Naive thymus-derived CD4-positive, alpha-beta T cell (primary cell): ENCODE measurements at regions of chr6 and their contacts with region 1.

Region 1: DNA sequence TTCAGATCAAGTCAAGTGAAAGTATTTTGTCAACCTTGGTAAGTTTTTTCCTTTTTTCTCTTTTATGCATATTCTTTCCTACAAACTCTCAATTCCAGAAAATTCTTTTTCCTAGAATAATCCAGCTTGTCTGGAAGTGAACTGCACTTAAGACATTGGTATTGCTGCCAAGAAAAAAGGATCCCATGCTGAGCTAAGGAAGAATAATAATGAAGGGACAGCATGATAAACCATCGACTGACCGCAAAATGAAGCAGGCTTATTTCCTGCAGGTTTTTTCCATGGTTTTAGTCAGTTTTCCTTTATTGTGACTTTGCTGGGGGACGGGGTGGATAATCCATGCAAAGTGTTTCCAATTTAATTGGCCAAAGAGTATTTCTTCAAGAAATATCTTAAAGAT is 857.6 kb upstream of the SLC35B3 start:
- DNase-seq: no peak
- ATAC-seq: no peak
- H3K4me3 ChIP-seq: no peak overlapping the region
- H3K4me3 Mint-ChIP-seq: no peak overlapping the region
- H3K27ac ChIP-seq: no peak overlapping the region
- H3K27ac Mint-ChIP-seq: no peak overlapping the region
- H3K4me1 ChIP-seq: no peaks in the 10 kb centered on the region
- H3K4me1 Mint-ChIP-seq: no peaks in the 10 kb centered on the region
- H3K27me3 ChIP-seq: no peaks in the 10 kb centered on the region
- H3K27me3 Mint-ChIP-seq: no peaks in the 10 kb centered on the region

Region 2: GRCh38 chr6:9977411-9977810 is 684.4 kb after region 1 on chr6:
- CTCF ChIA-PET with region 1: no interaction called
- POLR2A ChIA-PET with region 1: no interaction called
- intact Hi-C with region 1: loop called in 1 of 2 experiments (anchors 5 kb)
- DNase-seq: no peak
- ATAC-seq: no peak
- H3K4me3 ChIP-seq: no peak overlapping the region
- H3K4me3 Mint-ChIP-seq: no peak overlapping the region
- H3K27ac ChIP-seq: no peak overlapping the region
- H3K27ac Mint-ChIP-seq: no peak overlapping the region
- H3K4me1 ChIP-seq: no peaks in the 10 kb centered on the region
- H3K4me1 Mint-ChIP-seq: no peaks in the 10 kb centered on the region
- H3K27me3 ChIP-seq: no peaks in the 10 kb centered on the region
- H3K27me3 Mint-ChIP-seq: peaks cover 0 to 5% (median 0%) of the 10 kb centered on the region in 5 donors